ENCODE measurements at regions of chr21 and their contacts with region 1.

Region 1: GRCh38 chr21:46264690-46265144 is 20.7 kb downstream of the MCM3AP start:
- DNase-seq: peak; percentile 53 to 77 (median 63)
- ATAC-seq: peak; percentile 86
- H3K4me3 ChIP-seq: no peak overlapping the region
- H3K27ac ChIP-seq: no peak overlapping the region; the same call in 2 of the 3 replicates
- H3K4me1 ChIP-seq: peaks cover 0 to 22% of the 10 kb centered on the region in 2 experiments; a peak in 3 of 5 replicates
- H3K27me3 ChIP-seq: no peaks in the 10 kb centered on the region; a peak in 1 of 5 replicates
- CTCF ChIP-seq: peak; percentile 31 to 39 (median 35); a peak in 4 of 6 replicates
- EP300 ChIP-seq: no peak
- POLR2A ChIP-seq: peak; percentile 42; the same call in 1 of the 2 replicates
- RAD21 ChIP-seq: peak in 1 of 2 experiments; percentile 24; a peak in 1 of 4 replicates

Region 2: GRCh38 chr21:45748598-45748997 is 516.1 kb before region 1 on chr21:
- CTCF ChIA-PET with region 1: no interaction called
- POLR2A ChIA-PET with region 1: no interaction called
- in situ Hi-C with region 1: no loop called
- intact Hi-C with region 1: no loop called
- DNase-seq: no peak
- ATAC-seq: no peak
- H3K4me3 ChIP-seq: no peak overlapping the region
- H3K27ac ChIP-seq: no peak overlapping the region
- H3K4me1 ChIP-seq: no peaks in the 10 kb centered on the region
- H3K27me3 ChIP-seq: peaks cover 0 to 9% of the 10 kb centered on the region in 2 experiments; a peak in 3 of 5 replicates
- CTCF ChIP-seq: no peak
- EP300 ChIP-seq: no peak
- POLR2A ChIP-seq: no peak
- RAD21 ChIP-seq: no peak

Region 3: DNA sequence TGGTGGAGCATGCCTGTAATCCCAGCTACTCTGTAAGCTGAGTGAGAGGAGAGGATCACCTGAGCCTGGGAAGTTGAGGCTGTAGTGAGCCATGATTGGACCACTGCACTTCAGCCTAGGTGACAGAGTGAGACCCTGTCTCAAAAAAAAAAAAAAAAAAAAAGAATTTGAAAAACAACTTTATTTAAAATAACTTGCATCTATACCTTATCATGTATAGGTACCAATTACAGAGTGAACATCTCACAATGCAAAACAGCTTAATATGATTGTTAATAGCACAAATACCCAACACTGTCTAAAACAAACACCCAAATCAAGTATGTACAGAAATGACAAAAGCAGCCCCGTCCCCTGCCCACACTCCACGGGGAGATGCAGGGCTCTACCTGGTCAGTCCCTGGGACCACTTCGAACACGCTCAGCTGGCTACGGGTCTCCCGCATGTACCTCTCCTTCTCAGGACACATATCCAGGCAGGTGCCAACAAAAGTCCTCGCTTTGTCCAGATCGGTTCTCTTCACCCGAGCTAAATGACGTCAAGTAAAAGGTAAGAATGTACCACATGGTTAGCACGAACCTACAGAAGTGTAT is 10.2 kb after region 1 on chr21:
- CTCF ChIA-PET with region 1: no interaction called
- POLR2A ChIA-PET with region 1: interaction called, 16 read pairs
- in situ Hi-C with region 1: no loop called
- intact Hi-C with region 1: no loop called
- DNase-seq: no peak
- ATAC-seq: no peak
- H3K4me3 ChIP-seq: no peak overlapping the region
- H3K27ac ChIP-seq: no peak overlapping the region
- H3K4me1 ChIP-seq: no peaks in the 10 kb centered on the region
- H3K27me3 ChIP-seq: no peaks in the 10 kb centered on the region
- CTCF ChIP-seq: no peak
- EP300 ChIP-seq: no peak
- POLR2A ChIP-seq: no peak
- RAD21 ChIP-seq: no peak